Uterus (tissue), 4 donors: ENCODE measurements at regions of chr17 and their contacts with region 1.

Region 1: DNA sequence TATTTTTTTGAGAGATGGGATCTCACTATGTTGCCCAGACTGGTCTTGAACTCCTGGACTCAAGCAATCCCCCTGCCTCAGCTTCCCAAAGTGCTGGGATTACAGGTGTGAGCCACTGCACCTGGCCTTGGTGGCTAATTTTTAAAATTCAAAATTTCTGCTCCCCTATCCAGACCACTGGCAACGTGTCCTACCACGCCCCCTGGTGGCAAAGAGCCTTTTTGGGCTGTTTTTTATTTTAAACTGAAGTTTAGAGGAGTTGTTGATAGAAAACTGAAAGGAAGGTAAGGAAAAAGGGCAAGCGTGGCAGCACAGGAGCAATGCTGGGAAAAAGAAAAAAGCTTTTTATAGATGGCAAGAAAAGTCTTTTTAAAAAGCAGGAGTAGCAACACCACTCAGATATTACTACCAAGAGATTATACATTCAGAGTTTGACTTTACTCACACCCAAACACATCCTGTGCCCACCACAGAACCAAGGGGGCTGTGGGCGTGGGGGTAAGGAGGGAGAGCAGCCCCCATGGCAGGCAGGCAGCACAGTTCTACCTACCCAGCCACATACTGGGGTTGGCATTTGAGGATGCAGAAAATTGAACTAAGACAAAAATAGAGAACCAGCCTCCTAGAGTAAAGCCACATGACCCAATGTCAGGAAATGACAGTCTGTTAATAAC is 4.2 kb upstream of the MXRA7 start:
- DNase-seq: peak; percentile 74 to 87
- H3K4me3 ChIP-seq: no peak overlapping the region
- H3K27ac ChIP-seq: peak overlapping the region in 1 of 2 donors; percentile 26
- H3K4me1 ChIP-seq: peaks cover 0 to 6% of the 10 kb centered on the region in 2 donors
- H3K27me3 ChIP-seq: no peaks in the 10 kb centered on the region
- CTCF ChIP-seq: peak; percentile 80 to 92 (median 87)
- POLR2A ChIP-seq: no peak

Region 2: DNA sequence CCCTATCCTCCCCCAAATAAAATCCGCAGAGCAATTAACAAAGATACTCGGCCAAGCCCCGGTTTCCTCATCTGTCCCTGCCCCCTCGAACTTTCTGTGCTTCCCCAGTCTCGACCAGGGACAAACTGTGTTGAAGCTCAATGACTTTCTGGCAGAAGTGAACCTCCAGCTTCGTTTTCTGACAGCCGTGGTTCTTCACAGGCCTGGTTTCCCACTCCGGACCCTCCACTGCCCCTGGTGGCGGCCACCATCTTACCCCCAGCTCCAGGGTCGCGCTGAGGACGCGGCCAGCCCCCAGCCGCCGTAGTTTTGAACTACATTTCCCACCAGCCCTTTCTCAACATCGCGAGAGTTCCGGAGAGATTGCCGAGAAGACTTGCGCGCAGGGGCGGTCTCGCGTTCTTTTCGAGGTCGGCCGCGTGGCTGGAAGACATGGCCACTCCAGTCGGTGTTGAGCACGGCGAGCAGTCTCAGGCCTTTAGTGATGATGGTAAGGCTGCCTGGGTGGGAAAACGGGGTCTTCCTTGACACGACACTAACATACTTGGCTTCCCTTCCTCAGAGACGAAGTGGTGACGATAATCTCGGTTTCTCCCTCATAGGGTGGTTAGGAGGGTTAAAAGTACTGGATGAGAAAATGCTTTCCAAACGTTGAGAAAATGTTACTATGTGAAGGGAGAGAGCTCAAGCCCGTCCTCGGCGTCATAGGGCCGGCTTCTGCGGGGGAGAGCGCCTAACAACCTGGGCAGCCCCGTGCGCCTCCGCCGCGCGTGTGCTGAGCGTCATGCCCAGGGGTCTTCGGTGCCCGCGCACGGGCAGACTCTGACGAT is 157.4 kb before region 1 on chr17:
- intact Hi-C with region 1: loop called (anchors 10 kb)
- DNase-seq: peak; percentile 93 to 95
- H3K4me3 ChIP-seq: peak overlapping the region; percentile 67 to 77
- H3K27ac ChIP-seq: peak overlapping the region; percentile 83 to 87
- H3K4me1 ChIP-seq: peaks cover 5 to 13% of the 10 kb centered on the region in 2 donors
- H3K27me3 ChIP-seq: no peaks in the 10 kb centered on the region
- CTCF ChIP-seq: peak; percentile 32 to 70 (median 41)
- POLR2A ChIP-seq: peak; percentile 73 to 78

Region 3: GRCh38 chr17:76681222-76682137 is 33.5 kb before region 1 on chr17:
- intact Hi-C with region 1: loop called (anchors 5 kb)
- DNase-seq: peak; percentile 76 to 80
- H3K4me3 ChIP-seq: no peak overlapping the region
- H3K27ac ChIP-seq: peak overlapping the region; percentile 87 to 90
- H3K4me1 ChIP-seq: peaks cover 23 to 31% of the 10 kb centered on the region in 2 donors
- H3K27me3 ChIP-seq: no peaks in the 10 kb centered on the region
- CTCF ChIP-seq: peak; percentile 53 to 84 (median 80)
- POLR2A ChIP-seq: no peak

Region 4: GRCh38 chr17:76909971-76910760 is 195.2 kb after region 1 on chr17:
- intact Hi-C with region 1: no loop called
- DNase-seq: no peak
- H3K4me3 ChIP-seq: no peak overlapping the region
- H3K27ac ChIP-seq: no peak overlapping the region
- H3K4me1 ChIP-seq: no peaks in the 10 kb centered on the region
- H3K27me3 ChIP-seq: no peaks in the 10 kb centered on the region
- CTCF ChIP-seq: no peak
- POLR2A ChIP-seq: no peak